Aorta (tissue), 5 donors: ENCODE measurements at regions of chr21 and their contacts with region 1.

Region 1: DNA sequence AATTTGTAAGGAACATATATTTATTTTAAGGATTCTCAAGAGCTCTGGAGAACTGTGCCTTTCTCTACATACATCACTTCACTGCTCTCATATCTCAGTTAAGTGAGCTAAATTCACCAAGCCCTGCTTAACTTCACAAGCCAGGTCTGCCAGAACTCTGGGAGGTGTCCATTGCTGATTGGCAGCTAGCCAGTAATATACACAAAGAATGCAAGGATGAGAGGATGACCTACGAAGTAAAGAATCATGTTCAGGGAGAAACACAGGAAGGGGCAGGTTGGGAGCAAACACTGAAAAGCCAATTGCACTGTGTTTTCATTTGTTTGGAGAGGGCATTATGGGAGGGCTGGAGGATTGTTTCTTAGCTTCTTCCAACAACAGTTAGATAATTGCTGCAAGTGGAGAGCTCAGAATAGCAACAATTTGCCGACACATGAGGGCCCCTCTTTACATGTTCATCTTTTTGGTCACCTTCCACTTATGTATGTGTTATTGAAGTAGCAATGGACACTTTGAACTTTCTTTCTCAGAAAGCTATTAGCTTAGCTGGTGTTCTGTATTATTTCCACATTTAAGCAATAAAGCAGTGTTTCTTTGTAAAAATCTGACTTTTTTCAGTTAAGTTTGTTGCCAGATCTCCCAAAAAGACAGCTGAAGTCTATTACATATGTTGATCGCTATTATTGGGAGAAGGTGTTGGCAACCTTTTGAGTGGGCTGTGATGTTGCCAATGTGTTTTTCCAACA is 254.8 kb downstream of the LTN1 start:
- DNase-seq: no peak
- ATAC-seq: no peak
- H3K4me3 ChIP-seq: no peak overlapping the region
- H3K27ac ChIP-seq: no peak overlapping the region
- H3K4me1 ChIP-seq: no peaks in the 10 kb centered on the region
- H3K27me3 ChIP-seq: no peaks in the 10 kb centered on the region

Region 2: GRCh38 chr21:27622631-27623030 is 1115.2 kb before region 1 on chr21:
- intact Hi-C with region 1: loop called in 1 of 2 experiments (anchors 5 kb)
- DNase-seq: no peak
- ATAC-seq: no peak
- H3K4me3 ChIP-seq: no peak overlapping the region
- H3K27ac ChIP-seq: no peak overlapping the region
- H3K4me1 ChIP-seq: peaks cover 0 to 2% of the 10 kb centered on the region in 2 donors
- H3K27me3 ChIP-seq: no peaks in the 10 kb centered on the region

Region 3: GRCh38 chr21:28699596-28700259 is 38.1 kb before region 1 on chr21:
- intact Hi-C with region 1: no loop called
- DNase-seq: no peak
- ATAC-seq: no peak
- H3K4me3 ChIP-seq: no peak overlapping the region
- H3K27ac ChIP-seq: no peak overlapping the region
- H3K4me1 ChIP-seq: peaks cover 0 to 4% of the 10 kb centered on the region in 2 donors
- H3K27me3 ChIP-seq: no peaks in the 10 kb centered on the region